Vagina (tissue), 2 donors: ENCODE measurements at regions of chr19 and their contacts with region 1.

Region 1: DNA sequence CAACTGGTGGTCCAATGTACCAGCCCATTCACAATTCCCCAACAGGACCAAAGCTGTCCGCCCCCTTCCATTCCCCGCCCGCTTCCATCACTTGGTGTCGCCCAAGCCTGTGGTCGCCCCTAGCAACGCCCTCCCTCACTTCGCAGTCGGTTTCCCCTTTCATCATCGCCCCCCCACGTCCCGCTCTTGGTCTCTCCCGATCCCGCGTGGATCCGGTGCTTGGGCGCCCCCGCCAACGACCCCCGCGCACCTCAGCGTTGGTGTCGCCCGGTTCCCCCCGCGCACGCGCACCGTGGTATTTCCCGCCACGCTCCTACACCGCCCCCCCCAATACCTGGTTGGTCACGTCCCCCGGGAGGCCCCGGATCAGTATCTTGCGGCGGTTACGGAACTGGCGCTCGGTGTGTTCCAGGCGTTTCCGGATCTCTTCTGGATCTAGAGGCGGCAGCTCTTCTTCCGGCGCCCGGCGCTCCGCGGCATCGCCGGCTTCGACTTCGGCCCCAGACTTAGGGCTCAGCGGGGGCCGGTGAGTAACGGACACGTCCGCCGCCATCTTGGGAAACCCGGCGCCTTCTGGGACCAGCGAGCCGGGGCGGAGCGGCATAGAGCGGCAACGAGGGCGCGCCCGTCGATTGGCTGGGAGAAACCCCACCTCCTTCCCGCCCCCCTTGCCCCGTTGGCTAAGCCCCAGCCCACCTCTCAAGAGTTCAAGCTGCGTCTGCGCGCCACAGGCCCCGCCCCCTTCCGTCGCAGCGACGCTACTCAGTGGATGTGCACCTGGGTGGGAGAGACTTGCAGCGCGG is at the start of gene RAVER1:
- DNase-seq: peak in 1 of 2 donors; percentile 96
- H3K4me3 ChIP-seq: peak within 1 kb of the TSS; percentile 74 to 92
- H3K27ac ChIP-seq: peak within 1 kb of the TSS; percentile 78
- H3K4me1 ChIP-seq: peaks cover 23% of the 10 kb centered on the region
- H3K27me3 ChIP-seq: no peaks in the 10 kb centered on the region
- CTCF ChIP-seq: no peak
- POLR2A ChIP-seq: peak in 1 of 2 donors; percentile 51
- total RNA-seq, gene RAVER1: 25.5 TPM

Region 2: GRCh38 chr19:10269333-10270179 is 63.6 kb before region 1 on chr19:
- intact Hi-C with region 1: loop called (anchors 5 kb)
- DNase-seq: no peak
- H3K4me3 ChIP-seq: peak overlapping the region; percentile 44 to 48
- H3K27ac ChIP-seq: peak overlapping the region; percentile 68
- H3K4me1 ChIP-seq: peaks cover 17% of the 10 kb centered on the region
- H3K27me3 ChIP-seq: no peaks in the 10 kb centered on the region
- CTCF ChIP-seq: peak; percentile 91 to 98 (median 93)
- POLR2A ChIP-seq: no peak

Region 3: DNA sequence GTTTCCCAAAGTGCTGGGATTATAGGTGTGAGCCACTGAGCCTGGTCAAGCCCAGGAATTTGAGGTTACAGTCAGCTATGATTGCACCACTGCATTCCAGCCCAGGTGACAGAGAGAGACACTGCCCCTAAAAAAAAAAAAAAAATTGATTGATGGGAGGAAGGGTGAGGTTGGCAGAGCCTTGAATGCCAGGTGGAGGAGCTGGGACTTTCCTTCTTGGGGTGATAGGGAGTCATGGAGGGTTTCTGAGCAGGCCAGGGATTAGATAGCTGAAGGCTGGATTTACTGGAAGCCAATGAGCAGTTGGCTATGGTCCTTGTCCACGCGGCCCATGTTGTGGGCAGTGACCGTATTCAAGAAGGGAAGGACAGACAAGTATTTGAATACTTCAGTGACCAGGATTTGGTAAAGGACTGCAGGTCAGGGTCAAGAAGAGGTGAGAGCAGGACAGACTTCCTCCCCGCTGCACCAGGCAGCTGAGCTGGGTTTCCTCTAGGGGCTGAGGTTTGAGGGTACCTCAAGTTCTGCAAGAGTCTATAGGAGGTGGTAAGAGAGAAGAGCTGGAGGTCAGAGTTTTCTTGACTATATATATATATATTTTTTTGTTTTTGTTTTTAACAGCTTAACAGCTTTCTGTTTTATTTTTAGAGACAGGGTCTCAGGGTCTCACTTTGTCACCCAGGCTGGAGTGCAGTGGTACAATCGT is 53.3 kb before region 1 on chr19:
- intact Hi-C with region 1: no loop called
- DNase-seq: no peak
- H3K4me3 ChIP-seq: no peak overlapping the region
- H3K27ac ChIP-seq: no peak overlapping the region
- H3K4me1 ChIP-seq: no peaks in the 10 kb centered on the region
- H3K27me3 ChIP-seq: no peaks in the 10 kb centered on the region
- CTCF ChIP-seq: no peak
- POLR2A ChIP-seq: no peak

Region 4: DNA sequence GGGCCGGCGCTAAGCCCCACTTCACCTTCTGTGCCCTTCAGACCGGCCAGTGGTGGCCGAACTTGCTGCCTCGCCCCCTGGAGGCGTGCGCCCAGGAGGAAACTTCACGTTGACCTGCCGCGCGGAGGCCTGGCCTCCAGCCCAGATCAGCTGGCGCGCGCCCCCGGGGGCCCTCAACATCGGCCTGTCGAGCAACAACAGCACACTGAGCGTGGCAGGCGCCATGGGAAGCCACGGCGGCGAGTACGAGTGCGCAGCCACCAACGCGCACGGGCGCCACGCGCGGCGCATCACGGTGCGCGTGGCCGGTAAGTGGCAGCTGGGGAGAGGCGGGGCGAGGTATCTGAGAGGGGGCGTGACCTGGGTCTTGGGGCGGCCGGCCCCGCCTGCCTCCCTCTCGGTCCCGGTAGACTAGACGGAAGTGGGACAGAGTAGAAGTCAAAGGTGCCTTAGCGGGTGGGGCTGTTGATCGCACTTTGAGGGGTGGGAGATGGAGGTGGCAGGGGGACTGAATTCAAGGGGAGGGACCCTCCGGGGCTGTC is 37.8 kb before region 1 on chr19:
- intact Hi-C with region 1: no loop called
- DNase-seq: peak in 1 of 2 donors; percentile 91
- H3K4me3 ChIP-seq: peak overlapping the region; percentile 1 to 30
- H3K27ac ChIP-seq: no peak overlapping the region
- H3K4me1 ChIP-seq: peaks cover 47% of the 10 kb centered on the region
- H3K27me3 ChIP-seq: peaks cover 18% of the 10 kb centered on the region
- CTCF ChIP-seq: no peak
- POLR2A ChIP-seq: no peak